Caco-2 (cell line): ENCODE measurements at regions of chr11 and their contacts with region 1.

Region 1: GRCh38 chr11:30346068-30346688 is 23.3 kb downstream of the ARL14EP start:
- DNase-seq: peak in 1 of 2 experiments; percentile 58
- H3K4me3 ChIP-seq: no peak overlapping the region
- H3K4me3 Mint-ChIP-seq: no peak overlapping the region
- H3K27ac Mint-ChIP-seq: no peak overlapping the region
- H3K4me1 ChIP-seq: no peaks in the 10 kb centered on the region
- H3K4me1 Mint-ChIP-seq: no peaks in the 10 kb centered on the region
- H3K27me3 ChIP-seq: no peaks in the 10 kb centered on the region; the same call in 1 of the 2 replicates
- H3K27me3 Mint-ChIP-seq: peaks cover 4% of the 10 kb centered on the region
- CTCF ChIP-seq: peak; percentile 51 to 60

Region 2: GRCh38 chr11:30091728-30092127 is 254.4 kb before region 1 on chr11:
- CTCF ChIA-PET with region 1: no interaction called
- POLR2A ChIA-PET with region 1: no interaction called
- intact Hi-C with region 1: no loop called
- DNase-seq: no peak
- H3K4me3 ChIP-seq: no peak overlapping the region
- H3K4me3 Mint-ChIP-seq: no peak overlapping the region
- H3K27ac Mint-ChIP-seq: no peak overlapping the region
- H3K4me1 ChIP-seq: no peaks in the 10 kb centered on the region
- H3K4me1 Mint-ChIP-seq: no peaks in the 10 kb centered on the region
- H3K27me3 ChIP-seq: no peaks in the 10 kb centered on the region
- H3K27me3 Mint-ChIP-seq: peaks cover 4% of the 10 kb centered on the region
- CTCF ChIP-seq: no peak

Region 3: GRCh38 chr11:30535818-30536217 is 189.6 kb after region 1 on chr11:
- CTCF ChIA-PET with region 1: no interaction called
- POLR2A ChIA-PET with region 1: no interaction called
- intact Hi-C with region 1: loop called (anchors 5 kb)
- DNase-seq: no peak
- H3K4me3 ChIP-seq: no peak overlapping the region
- H3K4me3 Mint-ChIP-seq: no peak overlapping the region
- H3K27ac Mint-ChIP-seq: no peak overlapping the region
- H3K4me1 ChIP-seq: no peaks in the 10 kb centered on the region
- H3K4me1 Mint-ChIP-seq: no peaks in the 10 kb centered on the region
- H3K27me3 ChIP-seq: no peaks in the 10 kb centered on the region
- H3K27me3 Mint-ChIP-seq: peaks cover 2% of the 10 kb centered on the region
- CTCF ChIP-seq: no peak

Region 4: DNA sequence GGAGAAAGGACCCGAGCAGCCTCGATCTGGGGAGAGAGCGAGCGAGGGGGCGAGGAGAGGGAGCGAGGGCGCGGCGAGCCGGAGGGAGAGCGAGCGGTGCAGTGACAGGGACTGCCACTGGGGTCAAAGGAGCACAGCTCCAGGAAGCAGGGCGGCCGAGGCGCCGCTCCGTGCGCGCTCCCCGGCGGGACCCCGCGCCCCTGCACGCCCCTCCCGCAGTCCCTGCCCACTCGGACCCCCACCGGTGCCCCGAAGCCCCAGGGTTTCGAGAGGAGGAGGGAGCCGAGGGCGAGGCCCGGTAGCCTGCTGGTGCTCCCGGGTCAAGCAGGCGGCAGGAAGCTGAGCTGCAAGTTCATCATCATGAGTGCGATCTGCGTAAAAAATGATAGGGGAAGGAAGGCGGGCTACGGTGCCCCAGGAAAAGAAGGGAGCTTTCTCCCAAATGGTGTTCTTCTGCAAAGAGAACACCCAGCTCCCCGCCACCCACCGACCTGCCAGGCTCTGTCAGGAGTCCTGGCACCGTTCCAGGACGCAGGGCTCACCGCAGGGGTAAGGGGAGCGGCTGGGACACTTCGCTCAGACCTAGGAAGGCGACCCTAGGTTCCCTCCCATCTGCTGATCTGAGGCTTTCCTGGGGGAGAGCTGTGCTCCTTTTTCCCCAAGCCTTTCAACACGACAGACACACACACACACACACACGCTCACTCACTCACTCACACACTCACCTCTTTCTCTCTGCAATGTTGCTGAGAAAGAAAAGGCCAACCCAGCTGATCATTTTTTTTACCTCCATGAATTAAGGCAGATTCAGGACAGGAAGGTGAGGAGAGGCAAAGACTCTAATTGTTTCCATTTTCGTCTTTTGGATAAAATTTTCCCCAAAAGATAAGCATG is 240.3 kb after region 1 on chr11 and contains the start of gene MPPED2:
- CTCF ChIA-PET with region 1: no interaction called
- POLR2A ChIA-PET with region 1: no interaction called
- intact Hi-C with region 1: loop called (anchors 10 kb)
- DNase-seq: peak; percentile 40 to 51
- H3K4me3 ChIP-seq: peak within 1 kb of the TSS; percentile 35
- H3K4me3 Mint-ChIP-seq: peak within 1 kb of the TSS; percentile 63
- H3K27ac Mint-ChIP-seq: no peak within 1 kb of the TSS
- H3K4me1 ChIP-seq: peaks cover 4% of the 10 kb centered on the region; the same call in 1 of the 2 replicates
- H3K4me1 Mint-ChIP-seq: no peaks in the 10 kb centered on the region
- H3K27me3 ChIP-seq: peaks cover 1% of the 10 kb centered on the region
- H3K27me3 Mint-ChIP-seq: peaks cover 33% of the 10 kb centered on the region
- CTCF ChIP-seq: peak; percentile 45 to 50
- total RNA-seq, gene MPPED2: not detected in 2 replicates

Region 5: DNA sequence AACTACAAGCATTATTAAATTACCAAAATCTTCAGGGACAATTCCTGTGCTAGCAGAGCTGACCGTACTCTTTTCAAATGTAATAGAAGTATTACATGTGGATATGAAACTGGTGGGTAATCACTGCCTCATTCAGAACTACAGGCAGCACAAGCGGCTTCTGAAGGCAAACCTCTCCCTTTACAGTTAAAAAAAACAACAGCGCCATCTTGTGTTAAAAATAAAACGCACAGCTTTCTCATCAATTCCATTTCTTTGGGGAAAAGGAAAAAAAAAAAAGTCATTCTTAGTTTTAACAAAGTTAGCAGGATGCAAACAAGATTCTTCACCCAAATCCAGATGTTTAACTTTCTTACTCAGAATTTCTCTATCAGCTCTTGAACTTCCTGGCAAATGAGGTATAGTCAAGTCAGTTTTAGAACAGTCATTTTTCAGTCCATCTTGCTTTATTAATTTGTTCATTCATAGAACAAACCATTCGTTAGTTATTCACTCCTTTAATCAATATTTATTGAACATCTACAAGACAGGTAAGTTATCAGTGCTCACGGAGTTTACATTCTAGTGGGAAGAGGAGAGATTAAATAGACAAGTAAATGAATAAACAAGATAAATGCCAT is 571.8 kb after region 1 on chr11:
- CTCF ChIA-PET with region 1: no interaction called
- POLR2A ChIA-PET with region 1: no interaction called
- intact Hi-C with region 1: loop called (anchors 1 kb)
- DNase-seq: peak in 1 of 2 experiments; percentile 61
- H3K4me3 ChIP-seq: no peak overlapping the region
- H3K4me3 Mint-ChIP-seq: no peak overlapping the region
- H3K27ac Mint-ChIP-seq: no peak overlapping the region
- H3K4me1 ChIP-seq: no peaks in the 10 kb centered on the region
- H3K4me1 Mint-ChIP-seq: no peaks in the 10 kb centered on the region
- H3K27me3 ChIP-seq: no peaks in the 10 kb centered on the region; the same call in 1 of the 2 replicates
- H3K27me3 Mint-ChIP-seq: peaks cover 20% of the 10 kb centered on the region
- CTCF ChIP-seq: peak; percentile 55 to 75